Heart right ventricle (tissue), 16 donors: ENCODE measurements at regions of chr6 and their contacts with region 1.

Region 1: DNA sequence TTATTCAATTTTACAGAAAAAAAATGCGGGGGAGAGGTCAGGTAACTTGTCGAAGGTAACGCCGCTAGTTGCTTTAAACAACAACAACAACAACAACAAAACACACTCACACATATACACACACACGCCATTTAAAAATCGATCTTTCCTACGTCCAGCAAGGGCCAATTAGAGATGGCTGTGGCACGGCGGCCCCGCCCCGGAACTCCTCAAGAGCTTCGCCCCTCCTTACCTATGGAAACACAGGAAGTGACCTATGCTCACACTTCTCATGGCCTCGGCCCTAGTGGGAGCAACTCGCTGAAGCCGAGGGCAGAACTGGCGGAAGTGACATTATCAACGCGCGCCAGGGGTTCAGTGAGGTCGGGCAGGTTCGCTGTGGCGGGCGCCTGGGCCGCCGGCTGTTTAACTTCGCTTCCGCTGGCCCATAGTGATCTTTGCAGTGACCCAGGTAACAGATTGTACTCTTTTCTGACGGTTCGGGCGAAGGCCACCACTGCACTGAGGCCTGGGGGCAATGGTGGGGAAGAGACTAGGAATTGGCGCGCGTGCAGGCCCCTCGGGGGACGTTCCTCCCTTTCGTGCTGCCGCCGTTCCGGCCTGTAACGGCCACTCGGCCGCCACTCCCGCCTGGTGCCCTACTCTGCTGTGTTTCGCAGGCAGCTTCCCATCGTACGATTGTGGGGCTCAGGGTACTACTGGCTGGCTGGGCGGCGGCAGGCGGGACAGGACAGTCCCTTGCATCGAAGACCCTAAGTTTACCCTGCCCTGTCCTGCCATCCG is at the start of gene TBP:
- DNase-seq: peak; percentile 95 to 99
- ATAC-seq: peak; percentile 96 to 98 (median 97)
- H3K4me3 ChIP-seq: peak within 1 kb of the TSS; percentile 73 to 94 (median 88)
- H3K27ac ChIP-seq: peak within 1 kb of the TSS; percentile 88 to 97 (median 94)
- H3K4me1 ChIP-seq: peaks cover 8 to 54% (median 48%) of the 10 kb centered on the region in 9 donors
- H3K27me3 ChIP-seq: no peaks in the 10 kb centered on the region
- CTCF ChIP-seq: no peak
- total RNA-seq, gene TBP: 6.4 to 10.3 (median 7.6) TPM

Region 2: GRCh38 chr6:169212897-169213813 is 1341.0 kb before region 1 on chr6:
- intact Hi-C with region 1: loop called in 1 of 10 experiments (anchors 10 kb)
- DNase-seq: peak; percentile 92 to 95
- ATAC-seq: peak; percentile 97 to 100 (median 98)
- H3K4me3 ChIP-seq: peak overlapping the region in 9 of 10 donors; percentile 23 to 58 (median 46)
- H3K27ac ChIP-seq: peak overlapping the region; percentile 51 to 91 (median 87)
- H3K4me1 ChIP-seq: peaks cover 0 to 28% (median 10%) of the 10 kb centered on the region in 9 donors
- H3K27me3 ChIP-seq: no peaks in the 10 kb centered on the region
- CTCF ChIP-seq: peak in 8 of 9 donors; percentile 30 to 75 (median 50)

Region 3: GRCh38 chr6:169751242-169752073 is 802.7 kb before region 1 on chr6 and contains the starts of genes DYNLT2 and ERMARD:
- intact Hi-C with region 1: loop called in 8 of 10 experiments (anchors 1 to 10 kb)
- DNase-seq: peak; percentile 93 to 94
- ATAC-seq: peak; percentile 98 to 100 (median 99)
- H3K4me3 ChIP-seq: peak within 1 kb of the TSS; percentile 53 to 96 (median 88)
- H3K27ac ChIP-seq: peak within 1 kb of the TSS; percentile 81 to 99 (median 96)
- H3K4me1 ChIP-seq: peaks cover 2 to 32% (median 24%) of the 10 kb centered on the region in 9 donors
- H3K27me3 ChIP-seq: no peaks in the 10 kb centered on the region
- CTCF ChIP-seq: peak in 6 of 9 donors; percentile 12 to 44 (median 37)
- total RNA-seq, gene DYNLT2: 0.19 to 1.1 (median 0.61) TPM
- total RNA-seq, gene ERMARD: 7.5 to 14.9 (median 9.6) TPM

Region 4: DNA sequence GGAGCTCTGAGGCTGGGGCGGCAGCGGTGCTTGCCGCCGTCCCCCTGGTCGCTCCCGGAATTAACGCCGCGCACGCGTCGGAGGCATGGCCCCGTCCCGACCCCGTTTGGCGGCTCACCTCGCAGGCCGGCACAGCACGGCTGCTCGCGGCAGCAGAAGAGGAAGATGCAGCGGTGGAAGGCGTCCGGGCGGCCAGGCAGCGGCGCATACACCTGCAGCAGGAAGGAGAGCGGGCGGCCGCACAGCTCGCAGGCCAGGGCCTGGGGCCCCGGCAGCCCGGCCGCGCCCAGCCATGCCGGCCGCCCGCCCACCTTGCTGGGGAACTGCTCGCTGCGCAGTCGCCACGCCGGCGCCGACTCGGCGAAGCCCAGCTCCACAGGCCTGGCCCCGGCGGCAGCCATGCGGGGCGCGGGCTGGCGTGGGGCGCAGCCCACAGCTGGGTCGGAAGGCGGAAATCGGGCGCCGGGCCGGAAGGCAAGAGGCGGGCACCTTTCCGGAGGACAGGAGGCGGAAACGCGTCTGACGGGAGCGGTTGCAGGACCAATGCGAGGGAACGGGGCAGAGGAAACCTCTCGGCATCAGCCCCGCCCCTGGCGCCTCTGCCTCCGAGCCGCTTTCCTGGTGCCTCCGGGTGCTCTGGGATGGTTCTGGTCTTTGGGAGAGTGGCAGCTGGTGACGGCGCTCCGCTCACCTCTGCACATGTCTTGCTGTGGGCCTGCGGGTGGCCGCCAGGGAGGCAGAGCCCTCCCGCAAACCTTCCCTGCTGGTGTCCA is 30.2 kb after region 1 on chr6 and contains the start of gene PDCD2:
- intact Hi-C with region 1: loop called in 3 of 10 experiments (anchors 2 kb)
- DNase-seq: peak; percentile 92 to 93
- ATAC-seq: peak; percentile 98 to 99 (median 99)
- H3K4me3 ChIP-seq: peak within 1 kb of the TSS; percentile 74 to 98 (median 92)
- H3K27ac ChIP-seq: peak within 1 kb of the TSS; percentile 44 to 97 (median 90)
- H3K4me1 ChIP-seq: peaks cover 2 to 21% (median 18%) of the 10 kb centered on the region in 9 donors
- H3K27me3 ChIP-seq: no peaks in the 10 kb centered on the region
- CTCF ChIP-seq: peak in 1 of 9 donors; percentile 5
- total RNA-seq, gene PDCD2: 23.6 to 39.4 (median 34.0) TPM